CD4-positive, alpha-beta memory T cell (primary cell): ENCODE measurements at regions of chr11 and their contacts with region 1.

Region 1: DNA sequence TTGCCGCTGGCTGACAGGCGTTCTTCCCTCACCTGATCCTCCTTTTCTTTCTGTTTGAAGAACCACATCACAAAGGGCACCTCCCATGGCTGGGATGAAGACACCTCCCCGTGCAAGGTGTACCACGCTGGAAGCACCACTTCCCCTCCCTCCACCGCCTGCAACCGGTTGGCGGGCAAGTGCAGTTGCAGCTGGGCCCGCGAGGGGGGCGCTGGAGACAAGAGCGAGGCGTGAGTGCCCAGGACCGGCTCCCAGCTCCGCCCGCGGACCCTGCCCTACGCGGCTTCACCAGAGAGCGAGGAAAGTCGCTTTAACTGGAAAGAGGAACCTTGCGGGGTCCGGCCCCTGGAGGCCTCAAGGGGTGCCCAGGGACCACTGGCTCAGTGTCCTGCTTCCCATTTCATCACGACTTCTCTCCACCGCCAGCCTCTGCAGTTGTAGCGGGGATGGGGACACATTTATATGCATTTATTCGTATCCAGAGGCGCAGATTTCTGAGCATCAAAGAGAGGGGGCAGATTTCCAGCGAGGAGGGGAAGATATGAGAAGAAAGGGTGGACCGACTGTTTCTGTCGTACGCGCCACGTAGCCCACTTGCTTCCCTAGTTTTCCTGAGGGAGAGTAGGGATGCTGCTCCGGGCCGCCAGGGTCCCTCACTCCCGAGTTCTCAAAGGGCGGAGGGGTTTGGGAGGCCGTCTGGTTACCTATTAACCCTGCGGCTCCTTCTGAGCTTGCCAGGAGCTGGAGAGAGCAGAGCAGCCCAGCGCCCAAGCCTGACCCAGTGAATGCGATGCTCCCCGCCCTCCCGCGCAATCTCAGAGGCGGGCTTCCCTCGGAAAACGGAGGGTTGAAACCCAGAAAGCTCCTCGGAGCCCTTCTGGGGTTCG is 3.5 kb downstream of the ESAM start:
- DNase-seq: peak; percentile 62 to 74 (median 65)
- H3K4me3 ChIP-seq: no peak overlapping the region
- H3K4me3 Mint-ChIP-seq: peak overlapping the region; percentile 58 to 86 (median 72)
- H3K27ac ChIP-seq: no peak overlapping the region
- H3K27ac Mint-ChIP-seq: peak overlapping the region in 3 of 7 donors; percentile 18 to 43 (median 41)
- H3K4me1 ChIP-seq: peaks cover 33% of the 10 kb centered on the region
- H3K4me1 Mint-ChIP-seq: peaks cover 7 to 40% (median 22%) of the 10 kb centered on the region in 4 donors
- H3K27me3 ChIP-seq: peaks cover 34% of the 10 kb centered on the region
- H3K27me3 Mint-ChIP-seq: peaks cover 22 to 32% of the 10 kb centered on the region in 2 donors

Region 2: GRCh38 chr11:124644426-124645280 is 113.9 kb before region 1 on chr11:
- CTCF ChIA-PET with region 1: interaction called, 6 read pairs
- POLR2A ChIA-PET with region 1: no interaction called
- intact Hi-C with region 1: loop called (anchors 1 kb)
- DNase-seq: peak in 4 of 5 donors; percentile 25 to 36 (median 31)
- H3K4me3 ChIP-seq: no peak overlapping the region
- H3K4me3 Mint-ChIP-seq: no peak overlapping the region
- H3K27ac ChIP-seq: no peak overlapping the region
- H3K27ac Mint-ChIP-seq: no peak overlapping the region
- H3K4me1 ChIP-seq: peaks cover 4% of the 10 kb centered on the region
- H3K4me1 Mint-ChIP-seq: peaks cover 0 to 4% (median under 1%) of the 10 kb centered on the region in 4 donors
- H3K27me3 ChIP-seq: no peaks in the 10 kb centered on the region
- H3K27me3 Mint-ChIP-seq: no peaks in the 10 kb centered on the region

Region 3: GRCh38 chr11:124667601-124668000 is 91.0 kb before region 1 on chr11:
- CTCF ChIA-PET with region 1: interaction called, 224 read pairs
- POLR2A ChIA-PET with region 1: interaction called, 35 read pairs
- intact Hi-C with region 1: loop called (anchors 1 kb)
- DNase-seq: peak in 1 of 5 donors; percentile 30
- H3K4me3 ChIP-seq: no peak overlapping the region
- H3K4me3 Mint-ChIP-seq: no peak overlapping the region
- H3K27ac ChIP-seq: no peak overlapping the region
- H3K27ac Mint-ChIP-seq: no peak overlapping the region
- H3K4me1 ChIP-seq: peaks cover 25% of the 10 kb centered on the region
- H3K4me1 Mint-ChIP-seq: peaks cover 12 to 19% (median 16%) of the 10 kb centered on the region in 4 donors
- H3K27me3 ChIP-seq: no peaks in the 10 kb centered on the region
- H3K27me3 Mint-ChIP-seq: no peaks in the 10 kb centered on the region

Region 4: DNA sequence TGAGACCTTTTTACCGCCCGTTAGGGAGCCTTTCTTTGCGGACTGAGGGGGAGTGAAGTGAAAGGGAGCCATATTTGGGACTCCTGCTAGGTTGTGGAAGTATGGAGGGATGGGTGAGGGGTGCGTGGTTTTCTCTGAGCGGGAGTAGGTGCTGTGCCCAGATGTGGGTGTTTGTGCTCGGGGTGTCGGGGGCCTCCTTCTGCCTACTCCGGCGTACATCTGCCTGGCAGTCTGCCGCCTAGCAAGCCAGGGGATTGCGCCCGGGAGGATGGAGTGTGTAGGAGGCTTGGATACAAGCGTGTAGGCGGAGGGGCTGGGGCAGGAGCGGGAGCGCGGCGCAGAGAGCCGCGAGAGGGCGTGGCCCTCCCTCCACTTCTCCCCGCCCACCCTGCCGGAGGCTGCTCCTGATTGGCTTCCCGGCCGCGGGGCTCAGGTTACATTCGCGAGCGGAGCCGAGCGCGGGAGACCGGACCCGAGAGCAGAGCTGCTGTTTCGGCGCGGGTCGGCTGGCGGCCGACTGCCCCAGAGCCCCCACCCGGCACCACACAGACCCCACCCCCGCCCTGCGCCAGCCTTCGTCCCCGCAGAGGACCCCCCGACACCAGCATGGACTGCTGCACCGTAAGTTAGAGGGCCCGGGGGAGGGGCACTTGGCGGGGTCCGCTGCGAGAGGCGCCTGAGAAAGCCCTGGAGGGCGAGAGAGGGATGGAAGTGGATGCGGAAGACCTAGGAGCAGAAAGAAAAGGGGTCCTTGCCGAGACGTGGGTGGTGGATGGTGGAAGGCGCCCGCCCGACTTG is 18.9 kb before region 1 on chr11 and contains the start of gene NRGN:
- CTCF ChIA-PET with region 1: interaction called, 239 read pairs
- POLR2A ChIA-PET with region 1: interaction called, 50 read pairs
- intact Hi-C with region 1: loop called (anchors 1 kb)
- DNase-seq: peak; percentile 73 to 81 (median 76)
- H3K4me3 ChIP-seq: peak within 1 kb of the TSS; percentile 39 to 60
- H3K4me3 Mint-ChIP-seq: peak within 1 kb of the TSS; percentile 83 to 94 (median 86)
- H3K27ac ChIP-seq: no peak within 1 kb of the TSS
- H3K27ac Mint-ChIP-seq: peak within 1 kb of the TSS; percentile 38 to 80 (median 62)
- H3K4me1 ChIP-seq: peaks cover 17% of the 10 kb centered on the region
- H3K4me1 Mint-ChIP-seq: peaks cover 3 to 20% (median 16%) of the 10 kb centered on the region in 4 donors
- H3K27me3 ChIP-seq: peaks cover 5% of the 10 kb centered on the region
- H3K27me3 Mint-ChIP-seq: peaks cover 0 to 3% of the 10 kb centered on the region in 2 donors
- total RNA-seq, gene NRGN: 0.67 TPM in 1 of 2 experiments, not detected in the other

Region 5: GRCh38 chr11:124778281-124778680 is 19.7 kb after region 1 on chr11:
- CTCF ChIA-PET with region 1: interaction called, 28 read pairs
- POLR2A ChIA-PET with region 1: no interaction called
- intact Hi-C with region 1: no loop called
- DNase-seq: no peak
- H3K4me3 ChIP-seq: no peak overlapping the region
- H3K4me3 Mint-ChIP-seq: no peak overlapping the region
- H3K27ac ChIP-seq: no peak overlapping the region
- H3K27ac Mint-ChIP-seq: no peak overlapping the region
- H3K4me1 ChIP-seq: peaks cover 10% of the 10 kb centered on the region
- H3K4me1 Mint-ChIP-seq: peaks cover 15 to 19% (median 16%) of the 10 kb centered on the region in 4 donors
- H3K27me3 ChIP-seq: no peaks in the 10 kb centered on the region
- H3K27me3 Mint-ChIP-seq: no peaks in the 10 kb centered on the region

Region 6: GRCh38 chr11:124800226-124800929 is 41.8 kb after region 1 on chr11 and contains the start of gene MSANTD2:
- CTCF ChIA-PET with region 1: interaction called, 37 read pairs
- POLR2A ChIA-PET with region 1: interaction called, 24 read pairs
- intact Hi-C with region 1: loop called (anchors 1 kb)
- DNase-seq: peak; percentile 77 to 84 (median 79)
- H3K4me3 ChIP-seq: peak within 1 kb of the TSS; percentile 66 to 93
- H3K4me3 Mint-ChIP-seq: peak within 1 kb of the TSS; percentile 93 to 98 (median 96)
- H3K27ac ChIP-seq: peak within 1 kb of the TSS; percentile 78
- H3K27ac Mint-ChIP-seq: peak within 1 kb of the TSS; percentile 90 to 98 (median 97)
- H3K4me1 ChIP-seq: peaks cover 28% of the 10 kb centered on the region
- H3K4me1 Mint-ChIP-seq: peaks cover 18 to 40% (median 26%) of the 10 kb centered on the region in 4 donors
- H3K27me3 ChIP-seq: no peaks in the 10 kb centered on the region
- H3K27me3 Mint-ChIP-seq: peaks cover 0 to 2% of the 10 kb centered on the region in 2 donors
- total RNA-seq, gene MSANTD2: 25.9 to 26.3 TPM

Region 7: GRCh38 chr11:125224391-125225010 is 465.9 kb after region 1 on chr11:
- CTCF ChIA-PET with region 1: no interaction called
- POLR2A ChIA-PET with region 1: no interaction called
- intact Hi-C with region 1: no loop called
- DNase-seq: no peak
- H3K4me3 ChIP-seq: no peak overlapping the region
- H3K4me3 Mint-ChIP-seq: no peak overlapping the region
- H3K27ac ChIP-seq: no peak overlapping the region
- H3K27ac Mint-ChIP-seq: no peak overlapping the region
- H3K4me1 ChIP-seq: no peaks in the 10 kb centered on the region
- H3K4me1 Mint-ChIP-seq: no peaks in the 10 kb centered on the region
- H3K27me3 ChIP-seq: no peaks in the 10 kb centered on the region
- H3K27me3 Mint-ChIP-seq: peaks cover 4 to 7% of the 10 kb centered on the region in 2 donors